ENCODE measurements at regions of chr19 and their contacts with region 1.

Region 1: DNA sequence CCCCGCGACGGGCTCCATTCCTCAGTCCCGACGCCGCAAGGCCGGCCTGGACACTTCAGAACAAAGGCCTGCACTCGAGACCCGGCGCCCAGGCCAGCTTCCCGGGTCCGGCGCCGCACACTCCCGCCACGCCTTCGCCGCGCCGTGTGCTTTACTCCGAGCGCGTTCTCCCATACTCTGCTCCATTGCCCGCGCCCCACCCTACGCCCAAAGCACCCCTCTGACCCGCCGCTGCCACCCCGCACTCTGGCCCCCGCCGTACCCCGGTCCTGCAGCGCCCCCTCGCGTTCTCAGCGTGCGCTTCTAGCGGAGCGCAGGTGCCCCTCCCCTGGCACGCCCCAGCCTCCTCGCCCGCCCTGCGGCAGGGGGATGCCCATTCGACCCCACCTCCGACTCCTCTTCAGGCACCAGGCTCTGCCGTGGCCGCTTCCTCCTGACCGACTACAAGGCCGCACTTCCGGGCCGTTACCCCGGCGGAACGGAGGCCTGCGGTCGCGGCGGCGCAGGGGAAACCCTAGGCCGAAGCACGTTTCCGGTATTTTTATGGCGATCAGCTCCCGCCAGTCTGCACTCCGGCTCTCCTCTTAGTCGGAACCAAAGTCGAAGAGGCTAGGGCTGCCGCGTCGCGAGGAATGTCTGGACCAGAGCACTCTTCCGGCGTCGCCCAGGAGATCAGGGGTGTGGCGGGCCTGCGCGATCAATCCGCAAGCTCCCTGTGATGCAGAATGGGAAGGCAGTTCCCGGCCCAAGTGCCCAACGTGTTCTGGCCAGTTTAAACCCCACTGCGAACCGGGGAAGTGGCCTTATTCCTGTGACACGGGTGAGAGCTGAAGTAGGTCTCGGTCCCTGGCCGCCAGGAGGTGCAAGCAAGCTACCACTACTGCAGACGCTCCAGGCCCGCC is at the start of gene ZBTB45:
- DNase-seq: peak; percentile 95 to 96
- ATAC-seq: peak; percentile 95
- H3K4me3 ChIP-seq: peak within 1 kb of the TSS; percentile 40 to 50
- H3K27ac ChIP-seq: peak within 1 kb of the TSS; percentile 30 to 83
- H3K4me1 ChIP-seq: no peaks in the 10 kb centered on the region
- H3K27me3 ChIP-seq: no peaks in the 10 kb centered on the region
- total RNA-seq, gene ZBTB45: 12.2 to 15.6 TPM

Region 2: GRCh38 chr19:58203814-58204475 is 315.7 kb before region 1 on chr19:
- intact Hi-C with region 1: no loop called
- DNase-seq: no peak
- ATAC-seq: no peak
- H3K4me3 ChIP-seq: no peak overlapping the region
- H3K27ac ChIP-seq: no peak overlapping the region
- H3K4me1 ChIP-seq: no peaks in the 10 kb centered on the region
- H3K27me3 ChIP-seq: no peaks in the 10 kb centered on the region

Region 3: GRCh38 chr19:58499021-58499927 is 20.3 kb before region 1 on chr19:
- intact Hi-C with region 1: loop called in 1 of 2 experiments (anchors 1 kb)
- DNase-seq: peak; percentile 100
- ATAC-seq: peak; percentile 97
- H3K4me3 ChIP-seq: peak overlapping the region in 1 of 2 donors; percentile 40
- H3K27ac ChIP-seq: no peak overlapping the region
- H3K4me1 ChIP-seq: no peaks in the 10 kb centered on the region
- H3K27me3 ChIP-seq: no peaks in the 10 kb centered on the region

Region 4: DNA sequence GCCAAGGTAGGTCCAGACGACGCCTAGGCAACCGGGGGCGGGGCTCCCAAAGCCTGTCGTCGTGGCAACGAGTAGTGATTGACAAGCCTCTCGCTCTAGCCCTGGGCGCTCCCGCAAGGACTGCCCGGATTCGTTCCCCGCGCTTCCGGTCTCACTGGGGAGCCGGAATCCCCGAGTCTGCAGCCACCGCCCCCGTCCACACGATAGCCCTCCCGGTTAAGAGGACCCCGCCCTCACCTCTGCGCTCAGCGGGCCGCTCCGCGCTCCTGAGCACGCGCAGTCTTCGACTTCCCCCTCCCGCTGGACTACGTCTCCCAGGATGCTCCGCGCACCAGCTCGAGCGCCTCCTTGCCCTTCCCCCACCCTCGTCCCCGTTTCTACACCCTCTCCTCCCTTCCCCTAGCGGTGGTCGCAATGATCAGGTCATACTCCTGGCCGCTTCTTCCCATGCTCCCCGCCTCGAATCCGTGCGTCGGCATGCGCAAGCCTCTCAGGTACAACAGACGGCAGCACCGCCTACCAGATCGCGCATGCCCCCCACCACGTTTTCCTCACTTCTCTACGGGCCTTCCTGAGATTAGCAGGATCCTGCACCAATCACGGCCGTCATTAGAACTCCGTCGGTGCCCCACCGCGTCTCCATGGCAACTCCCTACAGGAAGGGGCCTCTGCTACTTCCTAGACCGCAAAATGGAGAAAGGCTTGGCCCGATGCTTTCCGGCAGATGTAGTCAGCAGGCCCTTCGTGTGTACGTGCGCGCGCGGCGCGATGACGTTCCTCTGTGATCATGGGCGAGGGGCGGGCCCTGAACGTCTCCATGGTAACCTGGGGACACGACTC is 53.4 kb after region 1 on chr19 and contains the start of gene MZF1:
- intact Hi-C with region 1: no loop called
- DNase-seq: peak; percentile 100
- ATAC-seq: peak; percentile 92
- H3K4me3 ChIP-seq: peak within 1 kb of the TSS; percentile 13 to 28
- H3K27ac ChIP-seq: peak within 1 kb of the TSS in 1 of 2 donors; percentile 81
- H3K4me1 ChIP-seq: no peaks in the 10 kb centered on the region
- H3K27me3 ChIP-seq: no peaks in the 10 kb centered on the region
- total RNA-seq, gene MZF1: 17.7 to 31.9 TPM

Measured in aorta (tissue), 5 donors.